ENCODE measurements at regions of chr22 and their contacts with region 1.

Region 1: DNA sequence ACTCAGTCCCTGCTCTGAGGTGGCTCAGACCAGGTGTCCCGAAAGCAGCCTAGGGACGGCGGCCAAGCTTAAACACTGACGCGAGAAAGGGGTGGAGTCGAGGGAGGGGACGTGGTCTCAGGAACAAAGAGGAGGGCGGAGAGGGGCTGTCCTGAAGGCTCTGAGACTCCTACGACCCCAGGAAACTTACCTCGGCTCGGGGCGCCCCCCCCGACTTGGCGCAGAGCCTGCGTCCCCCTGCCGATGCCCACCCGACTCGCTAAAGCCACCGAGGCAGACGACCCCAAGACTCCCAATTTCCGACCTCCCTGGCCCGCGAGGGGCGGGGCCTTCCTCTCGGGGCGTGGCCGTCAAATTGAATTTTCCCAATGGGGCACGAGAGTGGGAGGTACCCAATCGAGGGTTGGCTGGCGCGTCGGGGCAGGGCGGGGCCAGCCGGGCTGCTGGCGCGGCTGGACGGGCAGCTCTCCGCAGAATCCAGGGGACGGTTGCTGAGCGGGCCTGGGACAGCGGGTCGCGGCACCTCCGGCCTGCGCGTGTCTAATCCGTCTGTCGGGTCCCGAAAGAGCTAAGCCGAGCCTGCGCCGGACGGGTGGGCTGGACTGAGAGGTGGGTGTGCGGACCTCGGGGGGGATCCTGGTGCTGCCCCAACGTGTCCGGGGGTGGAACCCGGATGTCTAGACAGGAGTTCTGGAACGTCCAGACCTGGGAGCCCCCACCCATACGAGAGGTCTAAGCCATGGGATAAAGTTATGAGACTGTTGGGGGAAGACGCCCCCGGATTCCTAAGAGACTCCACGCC is at the start of gene SMTN:
- DNase-seq: peak; percentile 64 to 90 (median 83)

Region 2: DNA sequence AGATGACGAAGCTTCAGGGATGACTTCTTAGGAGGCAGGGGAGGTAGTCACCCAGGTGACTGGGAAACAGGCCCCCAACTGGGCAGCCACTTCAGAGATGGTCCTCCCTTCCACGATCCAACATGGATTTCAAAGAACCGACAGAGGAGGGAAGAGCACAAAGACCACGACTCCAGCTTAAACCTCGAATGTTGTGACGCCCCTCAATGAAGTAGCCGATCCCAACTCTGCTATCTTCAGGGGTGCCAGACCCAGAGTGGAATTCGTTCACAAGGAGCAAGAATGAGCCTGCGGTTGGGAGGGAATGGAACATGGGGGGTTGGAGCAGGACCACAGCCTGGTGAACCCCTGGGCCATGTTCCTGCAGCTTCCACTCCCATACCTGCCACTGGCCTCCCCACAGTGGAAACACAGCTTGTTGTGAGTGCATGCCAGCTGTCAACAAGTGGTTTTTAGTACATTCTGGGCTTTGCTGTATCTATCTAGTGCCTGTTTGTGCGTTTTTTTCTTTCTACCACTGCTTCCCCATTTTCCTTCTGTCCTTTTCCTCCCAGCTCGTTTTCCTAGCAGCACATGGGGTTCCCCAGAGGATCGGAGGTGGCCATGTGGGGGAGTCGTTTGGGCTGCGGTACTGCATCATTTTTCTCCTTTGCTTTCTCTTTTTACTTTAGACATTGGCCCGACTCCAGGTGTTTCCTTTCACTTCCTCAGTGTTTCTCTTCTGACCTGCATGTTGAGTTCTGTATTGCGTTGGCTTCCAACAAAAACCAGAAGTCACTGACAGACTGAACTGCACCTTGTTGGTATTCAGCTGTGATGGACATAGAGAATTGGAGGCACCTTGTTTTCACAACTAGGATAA is 178.3 kb before region 1 on chr22:
- intact Hi-C with region 1: no loop called
- DNase-seq: peak in 9 of 42 donors; percentile 4 to 40 (median 20)

Region 3: GRCh38 chr22:30947816-30948454 is 133.1 kb before region 1 on chr22:
- intact Hi-C with region 1: loop called (anchors 5 kb)
- DNase-seq: peak in 3 of 42 donors; percentile 13 to 51 (median 46)

Region 4: DNA sequence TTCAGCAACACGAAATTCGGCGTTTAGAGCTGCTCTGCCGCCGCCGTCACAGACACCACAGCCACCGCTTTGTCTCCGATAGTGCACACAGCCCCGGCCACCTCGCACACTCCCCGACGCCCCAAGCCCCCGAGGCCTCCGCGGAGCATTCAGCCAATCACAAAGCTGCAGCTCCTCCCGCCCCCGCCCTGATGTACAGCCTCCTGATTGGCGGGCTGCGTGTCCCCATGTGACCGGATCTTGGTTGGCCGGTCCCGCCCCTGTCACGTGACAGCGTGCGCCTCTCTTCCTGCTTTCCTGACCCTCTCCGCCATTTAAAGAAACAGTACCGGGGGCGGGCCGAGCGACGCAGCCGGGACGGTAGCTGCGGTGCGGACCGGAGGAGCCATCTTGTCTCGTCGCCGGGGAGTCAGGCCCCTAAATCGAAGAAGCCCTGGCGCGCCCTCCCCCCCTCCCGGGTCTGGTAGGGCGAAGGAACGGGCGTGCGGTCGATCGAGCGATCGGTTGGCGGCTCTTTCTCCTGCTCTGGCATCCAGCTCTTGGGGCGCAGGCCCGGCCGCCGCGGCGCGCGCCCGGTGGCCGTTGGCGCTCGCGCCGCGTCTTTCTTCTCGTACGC is 112.0 kb before region 1 on chr22 and contains the start of gene TUG1:
- intact Hi-C with region 1: loop called (anchors 5 kb)
- DNase-seq: peak; percentile 95 to 99 (median 98)

Region 5: DNA sequence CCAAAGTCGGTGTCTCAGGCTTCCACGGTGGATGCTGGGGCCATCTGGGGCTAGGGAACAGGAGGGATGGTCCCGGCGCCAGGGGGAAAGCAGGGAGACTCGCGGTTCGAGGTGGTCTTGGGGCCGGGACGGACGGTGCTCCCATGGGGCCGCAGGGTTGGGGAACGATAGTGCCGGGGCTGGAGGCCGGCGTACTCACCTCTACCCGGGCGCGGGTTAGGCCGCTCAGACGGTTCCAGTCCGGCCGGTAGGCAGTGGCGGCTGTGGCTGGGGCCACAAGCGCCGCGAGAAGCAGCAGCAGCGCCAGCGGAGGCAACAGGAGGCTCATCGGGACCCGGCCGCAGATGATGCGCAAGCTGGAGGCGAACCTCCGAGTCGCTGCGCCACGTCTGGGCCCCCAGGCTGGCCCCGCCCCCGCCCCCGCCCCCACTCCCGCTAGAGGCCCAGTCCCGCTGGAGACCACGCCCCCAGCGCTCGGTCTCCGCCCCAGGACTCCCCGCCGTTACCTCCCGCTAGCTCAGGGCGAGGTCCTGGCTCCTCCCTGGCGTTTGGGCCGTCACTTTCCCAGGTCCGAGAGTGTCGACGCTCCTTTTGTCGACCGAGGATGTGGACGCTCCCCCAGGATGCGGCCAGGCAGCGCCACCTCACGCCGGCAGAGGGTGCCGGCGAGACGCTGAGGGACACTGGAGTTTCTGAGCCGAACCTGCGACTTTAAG is 26.3 kb after region 1 on chr22 and contains the start of gene SELENOM:
- intact Hi-C with region 1: loop called (anchors 1 kb)
- DNase-seq: peak; percentile 81 to 96 (median 92)

Region 6: DNA sequence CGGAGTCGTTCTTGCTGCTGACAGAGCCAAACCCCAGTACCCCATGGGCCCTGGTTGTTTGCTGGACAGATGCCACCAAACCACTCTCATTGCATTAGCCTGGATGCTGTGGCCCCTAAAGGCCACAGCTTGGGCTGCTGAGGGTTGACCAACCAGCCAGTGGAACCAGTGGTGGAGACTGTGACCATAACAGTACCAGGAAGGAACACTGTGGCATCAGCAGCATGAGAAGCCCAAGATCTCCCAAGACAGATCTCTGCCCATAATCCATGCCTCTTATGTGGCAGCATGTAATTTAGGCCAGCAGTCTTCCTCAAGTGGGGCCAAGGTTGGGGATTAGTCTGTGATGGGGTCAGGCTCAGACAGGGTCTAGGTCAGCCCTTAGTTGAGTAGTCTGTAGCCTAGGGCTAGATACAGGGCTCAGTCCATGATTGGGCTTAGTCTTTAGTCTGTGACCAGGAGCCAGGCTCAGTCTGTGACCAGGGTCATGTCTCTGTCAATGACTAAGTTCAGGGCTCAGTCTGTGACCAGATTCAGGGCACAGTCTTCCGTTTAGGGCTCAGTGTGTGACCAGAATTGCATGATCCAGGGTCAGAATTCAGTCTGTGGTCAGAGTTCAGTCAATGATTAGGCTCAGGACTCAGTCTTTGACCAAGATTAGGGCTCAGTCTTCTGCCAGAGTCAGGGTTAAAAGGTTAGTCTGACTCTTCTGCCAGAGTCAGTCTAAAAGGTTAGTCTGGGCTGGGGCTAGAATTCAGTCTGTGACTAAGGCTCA is 37.2 kb after region 1 on chr22:
- intact Hi-C with region 1: no loop called
- DNase-seq: no peak